Pancreas (tissue), 10 donors: ENCODE measurements at regions of chr7 and their contacts with region 1.

Region 1: DNA sequence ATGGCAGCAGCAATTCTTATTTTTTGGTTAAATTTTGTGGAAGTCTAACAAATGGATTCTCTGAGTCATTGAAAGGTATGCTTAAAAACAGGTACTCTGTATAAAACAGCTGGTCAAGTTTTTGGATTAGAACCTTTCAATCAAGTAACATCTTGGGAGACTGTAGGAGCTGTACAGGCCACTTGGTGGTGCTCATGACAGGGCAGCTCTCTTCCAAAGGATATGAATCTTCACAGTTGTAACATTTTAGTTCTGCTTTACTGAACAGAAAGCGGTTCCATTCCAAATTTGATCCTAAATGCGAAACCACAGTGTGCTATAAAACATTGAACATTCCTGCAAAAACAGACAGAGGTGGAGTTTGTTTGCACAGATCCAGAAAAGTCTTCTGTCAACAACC is 44.5 kb upstream of the AGR3 start:
- DNase-seq: no peak
- ATAC-seq: peak in 3 of 4 donors; percentile 54 to 67 (median 61)
- H3K4me3 ChIP-seq: no peak overlapping the region
- H3K27ac ChIP-seq: no peak overlapping the region
- H3K4me1 ChIP-seq: peaks cover 0 to 7% (median 6%) of the 10 kb centered on the region in 3 donors
- H3K27me3 ChIP-seq: no peaks in the 10 kb centered on the region
- CTCF ChIP-seq: peak in 3 of 4 donors; percentile 21 to 49 (median 34)

Region 2: GRCh38 chr7:16695621-16696237 is 230.6 kb before region 1 on chr7:
- intact Hi-C with region 1: loop called in 1 of 3 experiments (anchors 10 kb)
- DNase-seq: peak in 2 of 6 donors; percentile 17 to 48
- ATAC-seq: peak; percentile 75 to 96 (median 93)
- H3K4me3 ChIP-seq: no peak overlapping the region
- H3K27ac ChIP-seq: no peak overlapping the region
- H3K4me1 ChIP-seq: no peaks in the 10 kb centered on the region
- H3K27me3 ChIP-seq: no peaks in the 10 kb centered on the region
- CTCF ChIP-seq: peak in 3 of 4 donors; percentile 29 to 58 (median 44)

Region 3: DNA sequence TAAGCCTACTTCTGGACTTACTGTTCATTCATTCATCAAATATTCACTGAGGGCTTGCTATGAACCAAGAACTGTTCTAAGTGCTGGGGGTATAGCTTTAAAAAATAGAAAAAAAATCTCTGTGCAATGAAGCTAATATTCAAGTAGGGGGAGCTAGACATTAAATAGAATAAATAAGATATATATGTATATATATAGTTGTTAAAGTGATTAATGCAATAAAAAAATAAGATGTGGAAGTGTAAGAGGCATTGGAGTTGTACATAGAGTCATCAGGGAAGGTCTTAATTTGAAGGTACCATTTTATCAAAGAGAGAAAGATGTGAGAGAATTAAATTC is 136.7 kb after region 1 on chr7:
- intact Hi-C with region 1: no loop called
- DNase-seq: no peak
- ATAC-seq: peak in 2 of 4 donors; percentile 70 to 71
- H3K4me3 ChIP-seq: no peak overlapping the region
- H3K27ac ChIP-seq: no peak overlapping the region
- H3K4me1 ChIP-seq: no peaks in the 10 kb centered on the region
- H3K27me3 ChIP-seq: no peaks in the 10 kb centered on the region
- CTCF ChIP-seq: no peak